ENCODE measurements at regions of chr5 and their contacts with region 1.

Region 1: DNA sequence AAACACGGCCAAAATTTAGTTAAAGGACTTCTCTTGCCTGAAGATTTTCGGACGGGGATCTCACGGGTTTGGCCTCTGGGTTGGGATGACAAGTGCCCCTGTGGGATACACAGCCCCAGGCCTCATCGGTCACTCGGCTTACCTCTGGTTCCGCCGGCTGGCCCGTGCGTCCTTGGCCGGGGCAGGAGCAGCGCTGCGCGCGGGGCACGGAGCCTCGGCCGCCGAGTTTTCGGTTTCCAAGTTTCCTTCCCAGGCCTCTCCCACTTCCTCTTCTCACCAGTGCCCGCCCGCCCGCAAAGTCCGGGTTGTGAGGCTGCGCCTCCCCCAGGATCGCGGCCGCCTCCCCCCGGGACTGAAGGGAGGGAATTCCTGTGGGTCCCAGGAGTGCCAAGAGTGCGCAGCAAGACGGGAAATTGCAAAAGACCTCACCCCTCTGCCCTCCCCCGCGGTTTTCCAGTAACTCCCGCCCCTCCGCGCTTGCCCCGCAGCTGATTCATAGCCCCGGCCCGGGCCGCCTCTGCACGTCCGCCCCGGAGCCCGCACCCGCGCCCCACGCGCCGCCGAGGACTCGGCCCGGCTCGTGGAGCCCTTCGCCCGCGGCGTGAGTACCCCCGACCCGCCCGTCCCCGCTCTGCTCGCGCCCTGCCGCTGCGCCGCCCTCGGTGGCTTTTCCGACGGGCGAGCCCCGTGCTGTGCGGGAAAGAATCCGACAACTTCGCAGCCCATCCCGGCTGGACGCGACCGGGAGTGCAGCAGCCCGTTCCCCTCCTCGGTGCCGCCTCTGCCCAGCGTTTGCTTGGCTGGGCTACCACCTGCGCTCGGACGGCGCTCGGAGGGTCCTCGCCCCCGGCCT is at the start of gene OSMR:
- DNase-seq: peak; percentile 99
- H3K4me3 Mint-ChIP-seq: peak within 1 kb of the TSS; percentile 99
- H3K27ac Mint-ChIP-seq: peak within 1 kb of the TSS; percentile 99
- H3K4me1 Mint-ChIP-seq: peaks cover 29% of the 10 kb centered on the region
- H3K27me3 Mint-ChIP-seq: no peaks in the 10 kb centered on the region
- CTCF ChIP-seq: no peak
- total RNA-seq, gene OSMR: 86.1 and 89.1 TPM in 2 replicates

Region 2: DNA sequence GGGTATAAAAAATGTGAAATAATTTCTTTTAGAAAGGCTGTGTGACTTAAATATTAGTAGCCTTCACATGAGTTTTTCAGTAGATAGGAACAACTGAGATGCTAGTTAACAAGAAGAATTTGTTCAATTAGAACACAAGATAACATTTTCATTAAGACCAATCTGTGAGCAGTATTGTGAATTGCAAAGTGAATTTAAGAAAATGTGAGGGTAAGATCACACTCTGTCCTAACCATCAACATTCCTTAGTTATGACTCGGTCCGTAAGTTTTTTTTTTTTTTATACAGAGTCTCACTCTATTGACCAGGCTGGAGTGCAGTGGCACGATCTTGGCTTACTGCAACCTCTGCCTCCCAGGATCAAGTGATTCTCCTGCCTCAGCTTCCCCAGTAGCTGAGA is 767.6 kb before region 1 on chr5:
- CTCF ChIA-PET with region 1: no interaction called
- POLR2A ChIA-PET with region 1: no interaction called
- intact Hi-C with region 1: no loop called
- DNase-seq: peak; percentile 8
- H3K4me3 Mint-ChIP-seq: no peak overlapping the region
- H3K27ac Mint-ChIP-seq: no peak overlapping the region
- H3K4me1 Mint-ChIP-seq: no peaks in the 10 kb centered on the region
- H3K27me3 Mint-ChIP-seq: no peaks in the 10 kb centered on the region
- CTCF ChIP-seq: no peak

Region 3: GRCh38 chr5:38556599-38557305 is 289.0 kb before region 1 on chr5 and contains the start of gene LIFR:
- CTCF ChIA-PET with region 1: no interaction called
- POLR2A ChIA-PET with region 1: interaction called, 12 read pairs
- intact Hi-C with region 1: no loop called
- DNase-seq: peak; percentile 81
- H3K4me3 Mint-ChIP-seq: peak within 1 kb of the TSS; percentile 81
- H3K27ac Mint-ChIP-seq: peak within 1 kb of the TSS; percentile 33
- H3K4me1 Mint-ChIP-seq: no peaks in the 10 kb centered on the region
- H3K27me3 Mint-ChIP-seq: no peaks in the 10 kb centered on the region
- CTCF ChIP-seq: no peak
- total RNA-seq, gene LIFR: 3.7 and 3.9 TPM in 2 replicates

Region 4: GRCh38 chr5:38831909-38832308 is 13.8 kb before region 1 on chr5:
- CTCF ChIA-PET with region 1: interaction called, 5 read pairs
- POLR2A ChIA-PET with region 1: interaction called, 25 read pairs
- intact Hi-C with region 1: no loop called
- DNase-seq: peak; percentile 61
- H3K4me3 Mint-ChIP-seq: no peak overlapping the region
- H3K27ac Mint-ChIP-seq: peak overlapping the region; percentile 54
- H3K4me1 Mint-ChIP-seq: peaks cover 52% of the 10 kb centered on the region
- H3K27me3 Mint-ChIP-seq: no peaks in the 10 kb centered on the region
- CTCF ChIP-seq: peak; percentile 24

Region 5: DNA sequence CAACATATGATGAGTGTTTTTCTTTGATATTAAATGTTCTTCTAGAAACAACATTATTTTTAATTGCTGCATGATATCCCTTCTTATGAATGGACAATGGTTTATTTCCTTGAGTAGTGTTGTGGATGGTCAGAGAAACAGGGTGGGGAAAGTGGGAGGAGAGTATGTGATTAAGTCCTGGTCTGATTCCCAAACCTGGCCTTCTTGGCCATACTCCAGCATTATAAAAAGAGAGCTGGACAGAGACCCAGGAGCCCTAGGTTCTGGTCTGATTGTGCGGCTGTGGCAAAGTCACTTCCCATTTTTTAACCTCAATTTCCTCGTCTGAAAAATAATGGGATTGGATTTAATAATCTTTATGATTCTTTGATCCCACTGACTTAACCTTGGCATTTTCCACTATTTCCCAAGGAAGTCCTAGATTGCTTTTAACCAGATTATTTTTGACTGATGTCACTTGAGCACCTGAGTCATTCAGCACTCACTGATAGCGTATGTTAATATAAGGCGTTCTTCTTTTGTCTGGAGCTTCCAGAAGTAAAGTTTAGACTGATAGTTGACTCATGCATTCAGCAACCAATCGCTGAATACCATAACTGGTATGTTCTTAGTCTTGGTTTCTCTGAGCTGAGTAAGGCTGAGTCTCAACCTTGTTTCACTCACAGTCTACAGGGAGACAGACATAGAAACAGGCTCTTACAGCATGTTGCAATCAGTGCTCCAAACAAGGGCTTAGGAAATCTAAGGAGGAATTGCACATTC is 26.2 kb after region 1 on chr5:
- CTCF ChIA-PET with region 1: interaction called, 3 read pairs
- POLR2A ChIA-PET with region 1: interaction called, 179 read pairs
- intact Hi-C with region 1: loop called (anchors 1 kb)
- DNase-seq: peak; percentile 98
- H3K4me3 Mint-ChIP-seq: peak overlapping the region; percentile 48
- H3K27ac Mint-ChIP-seq: peak overlapping the region; percentile 95
- H3K4me1 Mint-ChIP-seq: peaks cover 33% of the 10 kb centered on the region
- H3K27me3 Mint-ChIP-seq: no peaks in the 10 kb centered on the region
- CTCF ChIP-seq: no peak

Measured in MCF 10A (cell line).